Panc1 (cell line): ENCODE measurements at regions of chr4 and their contacts with region 1.

Region 1: DNA sequence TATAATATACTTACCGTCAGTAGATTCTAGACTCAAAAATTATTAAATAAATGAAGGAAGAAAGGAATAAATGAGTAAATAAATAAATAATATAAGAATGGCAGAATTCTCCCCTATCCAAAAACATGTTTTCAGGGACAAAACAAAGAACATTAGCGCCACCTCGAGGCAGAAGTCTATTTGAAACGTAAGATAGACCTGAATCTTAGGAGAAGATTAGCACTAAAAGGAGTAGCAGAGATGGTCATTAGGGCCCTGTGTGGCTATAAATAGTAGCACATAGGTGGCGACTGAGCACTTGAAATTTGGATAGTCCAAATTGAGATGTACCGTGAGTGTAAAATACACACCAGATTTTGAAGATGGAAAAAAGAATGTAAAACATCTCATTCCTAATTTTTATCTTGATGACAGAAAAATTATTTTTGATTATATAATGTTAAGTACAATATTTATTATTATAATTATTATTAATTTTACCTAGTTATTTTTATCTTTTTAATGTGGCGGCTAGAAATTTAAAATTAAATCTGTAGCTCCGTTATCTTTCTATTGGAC is 24.3 kb upstream of the SRD5A3 start:
- DNase-seq: peak; percentile 39
- ATAC-seq: no peak
- H3K4me3 ChIP-seq: no peak overlapping the region
- H3K27ac ChIP-seq: no peak overlapping the region
- H3K4me1 ChIP-seq: no peaks in the 10 kb centered on the region
- H3K27me3 ChIP-seq: no peaks in the 10 kb centered on the region
- CTCF ChIP-seq: peak; percentile 50; the same call in 1 of the 2 replicates

Region 2: DNA sequence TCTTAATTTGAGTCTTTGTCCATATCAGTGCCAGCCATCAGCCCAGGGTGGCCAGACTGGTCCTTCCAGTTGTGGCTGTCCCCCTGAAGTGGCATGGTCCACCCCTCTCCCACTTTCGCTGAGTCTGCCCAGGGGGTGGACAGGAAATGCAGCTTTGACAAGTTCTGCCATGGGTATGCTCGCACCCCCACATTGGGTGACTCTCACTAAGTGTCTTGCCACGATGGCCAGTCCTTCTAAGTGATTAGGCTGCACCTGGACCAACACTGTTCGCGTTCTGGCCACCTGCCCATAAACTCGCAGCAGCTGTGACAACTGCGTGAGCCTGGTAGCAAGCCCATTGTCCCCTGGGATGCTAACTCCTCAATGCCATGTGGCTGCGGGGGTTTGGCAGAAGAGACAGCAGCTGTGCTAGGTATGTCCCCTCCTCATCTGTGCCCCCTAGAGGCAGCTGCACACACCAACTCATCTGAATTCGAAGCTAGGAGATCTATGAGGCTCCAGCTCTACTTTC is 1720.5 kb before region 1 on chr4:
- CTCF ChIA-PET with region 1: no interaction called
- POLR2A ChIA-PET with region 1: no interaction called
- in situ Hi-C with region 1: no loop called
- intact Hi-C with region 1: no loop called
- DNase-seq: no peak
- ATAC-seq: no peak
- H3K4me3 ChIP-seq: no peak overlapping the region
- H3K27ac ChIP-seq: no peak overlapping the region
- H3K4me1 ChIP-seq: no peaks in the 10 kb centered on the region
- H3K27me3 ChIP-seq: no peaks in the 10 kb centered on the region
- CTCF ChIP-seq: peak; percentile 52

Region 3: DNA sequence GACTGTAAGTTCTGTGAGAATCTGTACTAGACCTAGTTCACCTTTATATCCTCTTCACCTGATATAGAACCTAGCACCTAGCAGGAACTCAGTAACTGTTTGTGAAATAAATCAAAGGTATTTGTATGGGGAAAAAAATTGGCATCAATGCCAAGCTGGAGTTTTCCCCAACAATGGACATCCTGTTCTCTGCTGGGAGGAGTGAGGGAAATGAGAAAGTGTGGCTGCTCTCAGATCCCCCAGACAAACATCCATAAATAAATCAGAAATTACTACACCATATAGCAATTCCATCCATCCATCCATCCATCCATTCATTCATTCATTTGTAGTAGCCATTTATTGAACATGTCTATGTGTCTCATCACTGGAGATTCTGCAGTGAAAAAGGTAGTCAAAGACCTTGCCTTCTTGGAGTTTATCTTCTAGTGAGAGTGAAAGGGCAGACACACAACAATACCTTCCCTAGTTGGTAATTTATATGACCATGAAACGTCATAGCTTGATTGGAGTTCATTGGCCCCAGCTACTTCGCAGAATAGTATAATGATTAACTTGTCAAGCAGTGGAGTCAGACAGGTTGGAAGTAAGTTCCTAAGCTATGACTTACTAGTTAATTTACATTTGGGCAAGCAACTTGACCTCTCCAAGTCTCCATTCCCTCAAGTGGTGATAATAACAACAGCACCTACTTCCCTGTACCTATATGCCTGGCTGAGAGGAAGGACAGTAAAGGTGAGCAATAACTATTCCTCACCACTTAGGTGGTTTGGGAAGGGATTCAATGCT is 762.7 kb before region 1 on chr4:
- CTCF ChIA-PET with region 1: no interaction called
- POLR2A ChIA-PET with region 1: no interaction called
- in situ Hi-C with region 1: no loop called
- intact Hi-C with region 1: no loop called
- DNase-seq: no peak
- ATAC-seq: no peak
- H3K4me3 ChIP-seq: no peak overlapping the region
- H3K27ac ChIP-seq: no peak overlapping the region
- H3K4me1 ChIP-seq: no peaks in the 10 kb centered on the region
- H3K27me3 ChIP-seq: no peaks in the 10 kb centered on the region
- CTCF ChIP-seq: no peak

Region 4: DNA sequence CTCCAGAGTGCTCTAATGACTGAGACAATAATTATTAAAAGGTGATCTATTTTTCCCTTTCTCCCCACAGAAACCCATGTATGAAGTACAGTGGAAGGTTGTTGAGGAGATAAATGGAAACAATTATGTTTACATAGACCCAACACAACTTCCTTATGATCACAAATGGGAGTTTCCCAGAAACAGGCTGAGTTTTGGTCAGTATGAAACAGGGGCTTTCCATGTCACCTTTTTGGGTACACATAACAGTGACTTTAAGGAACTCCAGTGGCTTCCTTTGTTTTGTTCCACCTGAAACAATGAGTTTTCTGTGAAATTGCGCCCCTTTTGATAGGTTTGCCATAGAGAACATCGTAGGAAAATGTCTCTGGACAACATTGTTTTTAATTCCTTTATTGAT is 594.4 kb before region 1 on chr4:
- CTCF ChIA-PET with region 1: no interaction called
- POLR2A ChIA-PET with region 1: no interaction called
- in situ Hi-C with region 1: no loop called
- intact Hi-C with region 1: no loop called
- DNase-seq: no peak
- ATAC-seq: no peak
- H3K4me3 ChIP-seq: no peak overlapping the region
- H3K27ac ChIP-seq: no peak overlapping the region
- H3K4me1 ChIP-seq: no peaks in the 10 kb centered on the region
- H3K27me3 ChIP-seq: no peaks in the 10 kb centered on the region
- CTCF ChIP-seq: no peak

Region 5: DNA sequence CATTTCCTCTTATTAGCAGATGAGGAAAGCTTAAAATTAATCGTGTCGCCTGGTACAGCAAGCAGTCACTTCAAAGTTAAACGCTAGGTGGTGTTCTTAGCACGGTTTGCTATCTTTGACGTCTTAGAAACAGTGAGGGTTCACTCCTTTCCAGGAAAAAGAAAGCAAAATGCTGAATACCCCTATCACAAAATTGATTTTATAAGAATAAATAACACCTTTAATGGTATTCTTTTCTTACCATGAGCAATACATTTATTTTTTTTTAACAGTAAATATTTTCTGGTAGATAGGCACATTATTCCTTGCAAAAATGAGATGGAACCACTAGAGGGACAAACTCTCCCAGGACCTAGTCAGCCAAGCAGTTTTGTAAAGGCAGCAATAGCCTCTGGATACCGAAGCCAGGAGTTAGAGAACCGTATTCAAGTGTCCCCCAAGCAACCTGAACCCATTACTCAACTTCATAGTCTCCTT is 350.3 kb before region 1 on chr4:
- CTCF ChIA-PET with region 1: interaction called, 3 read pairs
- POLR2A ChIA-PET with region 1: no interaction called
- in situ Hi-C with region 1: no loop called
- intact Hi-C with region 1: loop called (anchors 1 kb)
- DNase-seq: peak; percentile 42
- ATAC-seq: peak; percentile 90
- H3K4me3 ChIP-seq: no peak overlapping the region
- H3K27ac ChIP-seq: no peak overlapping the region
- H3K4me1 ChIP-seq: no peaks in the 10 kb centered on the region
- H3K27me3 ChIP-seq: no peaks in the 10 kb centered on the region
- CTCF ChIP-seq: peak; percentile 77